IMR-90 (cell line): ENCODE measurements at regions of chr2 and their contacts with region 1.

Region 1: GRCh38 chr2:127810619-127811396 is at the start of gene WDR33:
- DNase-seq: peak; percentile 84
- ATAC-seq: peak; percentile 97
- H3K4me3 ChIP-seq: peak within 1 kb of the TSS; percentile 93
- H3K27ac ChIP-seq: peak within 1 kb of the TSS; percentile 88
- H3K4me1 ChIP-seq: no peaks in the 10 kb centered on the region
- H3K27me3 ChIP-seq: no peaks in the 10 kb centered on the region
- CTCF ChIP-seq: peak; percentile 28
- POLR2A ChIP-seq: peak; percentile 55; the same call in 1 of the 2 replicates
- RAD21 ChIP-seq: no peak; the same call in 1 of the 2 replicates
- total RNA-seq, gene WDR33: 41.2 and 47.8 TPM in 2 replicates

Region 2: DNA sequence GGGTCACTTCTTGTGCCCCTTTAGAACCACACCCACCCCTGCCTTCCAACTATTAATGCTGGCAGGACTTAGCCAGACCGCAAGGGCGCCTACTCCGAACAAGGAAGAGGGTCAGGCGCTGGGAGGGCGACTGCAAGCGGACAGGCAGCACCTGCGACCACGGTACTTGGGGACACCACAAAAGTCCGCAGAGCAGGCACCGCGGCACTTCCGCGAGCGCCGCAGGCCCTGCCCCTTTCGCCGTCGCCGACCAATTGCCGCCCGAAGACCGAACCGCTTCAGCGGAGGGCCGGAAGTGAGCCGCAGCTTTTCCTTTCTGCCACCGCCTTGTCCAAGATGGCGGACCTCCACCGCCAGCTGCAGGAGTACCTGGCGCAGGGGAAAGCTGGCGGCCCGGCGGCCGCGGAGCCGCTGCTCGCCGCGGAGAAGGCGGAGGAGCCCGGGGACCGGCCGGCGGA is 109.6 kb before region 1 on chr2 and contains the start of gene SFT2D3:
- CTCF ChIA-PET with region 1: no interaction called
- POLR2A ChIA-PET with region 1: interaction called, 12 read pairs
- dilution Hi-C with region 1: no loop called
- in situ Hi-C with region 1: no loop called
- intact Hi-C with region 1: loop called (anchors 2 kb)
- DNase-seq: peak; percentile 89
- ATAC-seq: peak; percentile 92
- H3K4me3 ChIP-seq: peak within 1 kb of the TSS; percentile 85
- H3K27ac ChIP-seq: peak within 1 kb of the TSS; percentile 91
- H3K4me1 ChIP-seq: peaks cover 8% of the 10 kb centered on the region
- H3K27me3 ChIP-seq: no peaks in the 10 kb centered on the region
- CTCF ChIP-seq: no peak
- POLR2A ChIP-seq: peak; percentile 93
- RAD21 ChIP-seq: no peak
- total RNA-seq, gene SFT2D3: 2.5 and 3.9 TPM in 2 replicates

Region 3: GRCh38 chr2:127770973-127771735 is 39.7 kb before region 1 on chr2:
- CTCF ChIA-PET with region 1: no interaction called
- POLR2A ChIA-PET with region 1: no interaction called
- dilution Hi-C with region 1: no loop called
- in situ Hi-C with region 1: no loop called
- intact Hi-C with region 1: loop called (anchors 5 kb)
- DNase-seq: peak; percentile 98
- ATAC-seq: peak; percentile 86
- H3K4me3 ChIP-seq: no peak overlapping the region
- H3K27ac ChIP-seq: peak overlapping the region; percentile 43; the same call in 1 of the 2 replicates
- H3K4me1 ChIP-seq: peaks cover 14% of the 10 kb centered on the region
- H3K27me3 ChIP-seq: no peaks in the 10 kb centered on the region
- CTCF ChIP-seq: no peak
- POLR2A ChIP-seq: no peak
- RAD21 ChIP-seq: no peak

Region 4: GRCh38 chr2:127783101-127783500 is 27.7 kb before region 1 on chr2:
- CTCF ChIA-PET with region 1: no interaction called
- POLR2A ChIA-PET with region 1: interaction called, 10 read pairs
- dilution Hi-C with region 1: no loop called
- in situ Hi-C with region 1: no loop called
- intact Hi-C with region 1: no loop called
- DNase-seq: no peak
- ATAC-seq: no peak
- H3K4me3 ChIP-seq: no peak overlapping the region
- H3K27ac ChIP-seq: no peak overlapping the region
- H3K4me1 ChIP-seq: no peaks in the 10 kb centered on the region; the same call in 1 of the 2 replicates
- H3K27me3 ChIP-seq: no peaks in the 10 kb centered on the region
- CTCF ChIP-seq: no peak
- POLR2A ChIP-seq: no peak
- RAD21 ChIP-seq: no peak

Region 5: DNA sequence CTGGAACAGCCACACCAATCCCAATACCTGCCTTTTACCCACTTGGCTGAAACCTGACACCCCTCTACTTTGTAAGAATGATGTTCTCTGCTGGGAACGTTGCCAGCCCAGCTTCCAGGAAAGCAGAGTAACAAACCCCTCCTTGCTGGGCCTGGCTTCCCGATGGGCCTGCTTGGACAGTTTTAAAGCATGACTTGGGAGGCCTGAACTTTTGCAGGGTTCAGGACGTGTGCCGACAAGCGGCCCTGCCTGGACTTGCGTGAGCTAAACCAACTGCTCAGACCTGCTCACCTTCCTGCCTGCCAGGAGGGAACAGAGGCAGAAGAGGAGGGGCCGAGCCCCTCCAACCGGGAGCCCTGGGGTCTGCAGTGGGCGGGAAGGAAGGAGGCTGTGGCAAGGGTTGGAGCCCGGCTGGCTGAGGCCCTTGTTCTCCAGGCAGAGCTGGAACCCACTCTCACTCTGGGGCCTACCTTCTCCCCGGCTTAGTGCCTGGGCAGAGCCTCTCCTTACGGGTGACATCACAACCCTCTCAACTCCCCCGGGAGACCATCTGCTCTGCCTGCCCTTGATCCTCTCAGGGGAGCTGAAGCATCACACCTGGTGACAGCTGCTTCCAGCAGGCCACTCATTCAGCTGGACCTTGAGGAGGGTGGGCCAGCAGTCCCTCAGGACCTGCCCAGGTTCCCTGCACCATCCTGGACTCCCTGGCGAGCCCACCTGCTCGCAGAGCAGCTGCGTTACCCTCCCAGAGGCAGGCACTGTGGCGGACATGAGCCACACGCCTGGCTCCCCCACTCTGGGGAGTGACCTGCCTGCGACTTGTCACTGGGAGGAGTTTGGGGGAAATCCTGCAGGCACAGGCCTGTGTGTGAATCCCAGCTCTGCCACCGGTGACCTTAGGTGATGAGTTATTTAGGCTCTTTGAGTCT is 494.6 kb after region 1 on chr2:
- CTCF ChIA-PET with region 1: no interaction called
- POLR2A ChIA-PET with region 1: no interaction called
- dilution Hi-C with region 1: no loop called
- in situ Hi-C with region 1: no loop called
- intact Hi-C with region 1: no loop called
- DNase-seq: peak; percentile 98
- ATAC-seq: peak; percentile 30
- H3K4me3 ChIP-seq: no peak overlapping the region
- H3K27ac ChIP-seq: peak overlapping the region; percentile 95
- H3K4me1 ChIP-seq: peaks cover 81% of the 10 kb centered on the region
- H3K27me3 ChIP-seq: no peaks in the 10 kb centered on the region
- CTCF ChIP-seq: 0 out of 2 replicates have a peak, but pooled peaks have one; percentile 8
- POLR2A ChIP-seq: peak; percentile 22
- RAD21 ChIP-seq: peak; percentile 5; the same call in 1 of the 2 replicates